Gastrocnemius medialis (tissue), 4 donors: ENCODE measurements at regions of chr17 and their contacts with region 1.

Region 1: GRCh38 chr17:69358688-69359596 is 32.0 kb upstream of the ABCA5 start:
- DNase-seq: no peak
- ATAC-seq: no peak
- H3K4me3 ChIP-seq: no peak overlapping the region
- H3K27ac ChIP-seq: no peak overlapping the region
- H3K4me1 ChIP-seq: peaks cover 10 to 12% of the 10 kb centered on the region in 2 donors
- H3K27me3 ChIP-seq: no peaks in the 10 kb centered on the region
- CTCF ChIP-seq: no peak
- POLR2A ChIP-seq: no peak

Region 2: DNA sequence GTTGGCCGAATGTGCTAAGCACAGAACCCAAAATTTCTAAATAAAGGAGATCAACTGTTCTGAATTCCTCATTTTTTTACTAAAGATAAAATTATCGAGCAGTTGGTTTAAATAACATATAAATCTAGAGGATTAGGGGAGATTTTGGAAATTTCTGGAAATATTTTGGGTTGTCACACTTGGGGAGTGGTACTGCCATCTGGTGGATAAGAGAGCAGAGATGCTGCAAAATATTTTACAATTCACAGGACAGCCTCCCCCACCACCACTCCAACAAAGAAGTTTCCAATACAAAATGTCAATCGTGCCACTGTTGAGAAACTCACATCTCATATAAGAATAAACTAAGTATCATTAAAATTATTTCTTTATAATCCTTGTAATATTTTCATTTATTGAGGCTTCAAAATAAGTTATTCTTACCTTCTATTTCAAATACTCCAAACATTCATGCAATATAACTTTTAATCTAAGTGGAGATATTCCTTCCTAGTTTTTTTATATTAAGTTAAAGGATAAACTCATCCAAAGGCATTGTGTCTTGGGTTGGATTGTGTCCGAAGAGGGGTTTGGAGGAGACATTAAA is 386.7 kb before region 1 on chr17:
- in situ Hi-C with region 1: no loop called
- intact Hi-C with region 1: no loop called
- DNase-seq: no peak
- ATAC-seq: no peak
- H3K4me3 ChIP-seq: no peak overlapping the region
- H3K27ac ChIP-seq: no peak overlapping the region
- H3K4me1 ChIP-seq: no peaks in the 10 kb centered on the region
- H3K27me3 ChIP-seq: no peaks in the 10 kb centered on the region
- CTCF ChIP-seq: peak; percentile 25 to 52 (median 44)
- POLR2A ChIP-seq: no peak

Region 3: DNA sequence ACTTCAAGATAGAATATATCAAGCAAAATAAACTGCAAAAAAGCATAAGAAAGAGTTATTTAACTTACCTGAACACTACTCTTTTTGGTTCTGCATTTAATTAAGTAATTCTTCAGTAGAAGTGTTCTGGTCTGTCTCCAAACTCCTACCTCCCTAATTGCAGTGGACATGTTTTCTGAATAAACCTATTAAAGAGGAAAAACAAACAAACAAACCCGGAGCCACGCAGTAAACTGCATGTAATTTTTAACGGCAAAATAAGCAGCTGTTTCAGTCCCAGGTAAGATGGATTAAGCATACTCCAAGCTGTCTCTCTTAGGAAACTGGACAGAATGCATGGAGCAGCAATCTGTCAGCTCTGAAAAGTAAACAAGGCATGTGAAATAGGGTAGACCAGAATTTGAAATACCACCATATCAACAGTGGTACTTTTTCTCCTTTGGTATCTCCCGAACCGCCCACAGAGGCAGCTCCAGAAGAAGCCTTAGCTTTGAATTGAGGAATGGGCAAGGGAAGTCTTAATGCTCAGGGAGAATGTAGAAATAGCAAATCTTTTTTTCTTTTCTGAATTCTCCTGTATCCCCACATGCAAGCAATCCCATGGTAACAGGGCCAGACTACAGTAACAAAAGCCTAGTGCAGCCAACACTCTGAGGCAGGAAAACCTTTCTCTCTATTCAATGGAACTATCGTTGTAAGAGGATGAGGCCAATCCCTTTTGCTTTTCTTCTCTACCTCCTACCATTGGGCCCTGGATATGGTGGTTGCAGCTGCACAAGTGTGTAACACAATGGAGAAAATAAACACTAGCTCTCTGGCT is 44.5 kb before region 1 on chr17:
- in situ Hi-C with region 1: no loop called
- intact Hi-C with region 1: loop called (anchors 5 kb)
- DNase-seq: no peak
- ATAC-seq: no peak
- H3K4me3 ChIP-seq: no peak overlapping the region
- H3K27ac ChIP-seq: peak overlapping the region in 1 of 4 donors; percentile 40
- H3K4me1 ChIP-seq: peaks cover 43 to 61% of the 10 kb centered on the region in 2 donors
- H3K27me3 ChIP-seq: no peaks in the 10 kb centered on the region
- CTCF ChIP-seq: no peak
- POLR2A ChIP-seq: no peak

Region 4: DNA sequence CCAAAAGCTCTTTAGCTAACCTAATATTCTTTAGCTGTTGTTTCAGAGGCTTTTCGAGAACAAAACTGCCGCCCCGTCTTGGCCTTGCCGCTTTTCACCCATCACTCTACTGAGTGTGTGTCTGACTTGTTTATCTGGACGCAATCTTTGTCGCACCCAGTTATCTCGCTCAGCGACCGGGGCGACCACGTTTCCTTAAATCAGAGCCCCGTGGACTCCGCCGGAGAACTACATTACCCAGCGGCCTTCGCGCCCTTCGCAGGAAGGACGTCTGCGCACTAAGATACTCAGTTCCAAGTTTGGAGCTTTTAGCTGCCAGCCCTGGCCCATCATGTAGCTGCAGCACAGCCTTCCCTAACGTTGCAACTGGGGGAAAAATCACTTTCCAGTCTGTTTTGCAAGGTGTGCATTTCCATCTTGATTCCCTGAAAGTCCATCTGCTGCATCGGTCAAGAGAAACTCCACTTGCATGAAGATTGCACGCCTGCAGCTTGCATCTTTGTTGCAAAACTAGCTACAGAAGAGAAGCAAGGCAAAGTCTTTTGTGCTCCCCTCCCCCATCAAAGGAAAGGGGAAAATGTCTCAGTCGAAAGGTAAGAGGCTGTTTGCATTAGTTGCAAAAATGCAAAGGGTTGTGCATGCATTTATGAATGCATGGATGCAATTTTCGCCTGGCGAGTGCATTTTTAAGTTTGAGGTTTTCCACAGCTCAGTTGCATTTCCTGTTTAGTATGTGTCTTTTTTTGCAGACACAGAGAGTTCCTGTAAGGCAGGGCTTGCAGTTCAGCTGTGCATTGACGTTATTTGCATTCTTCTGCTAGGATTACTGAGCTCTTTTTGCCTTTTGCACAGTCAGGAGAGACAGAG is 55.7 kb after region 1 on chr17 and contains the start of gene MAP2K6:
- in situ Hi-C with region 1: no loop called
- intact Hi-C with region 1: loop called (anchors 5 kb)
- DNase-seq: peak; percentile 78 to 83
- ATAC-seq: peak; percentile 86 to 91
- H3K4me3 ChIP-seq: peak within 1 kb of the TSS; percentile 60 to 94 (median 66)
- H3K27ac ChIP-seq: peak within 1 kb of the TSS; percentile 84 to 88 (median 86)
- H3K4me1 ChIP-seq: peaks cover 36 to 44% of the 10 kb centered on the region in 2 donors
- H3K27me3 ChIP-seq: no peaks in the 10 kb centered on the region
- CTCF ChIP-seq: no peak
- POLR2A ChIP-seq: peak; percentile 38 to 41
- total RNA-seq, gene MAP2K6: 35.1 to 351 (median 223) TPM